Heart left ventricle (tissue), 16 donors: ENCODE measurements at regions of chr3 and their contacts with region 1.

Region 1: GRCh38 chr3:122679085-122679881 is 1.4 kb upstream of the PARP14 start:
- DNase-seq: peak; percentile 81 to 88 (median 84)
- ATAC-seq: peak; percentile 62 to 79 (median 77)
- H3K4me3 ChIP-seq: peak overlapping the region in 10 of 12 donors; percentile 3 to 92 (median 76)
- H3K27ac ChIP-seq: peak overlapping the region; percentile 76 to 96 (median 94)
- H3K4me1 ChIP-seq: peaks cover 0 to 55% (median 20%) of the 10 kb centered on the region in 12 donors
- H3K27me3 ChIP-seq: no peaks in the 10 kb centered on the region
- CTCF ChIP-seq: peak; percentile 69 to 89 (median 82)
- POLR2A ChIP-seq: no peak

Region 2: GRCh38 chr3:122392868-122393844 is 286.1 kb before region 1 on chr3:
- intact Hi-C with region 1: loop called in 9 of 10 experiments (anchors 1 to 10 kb)
- DNase-seq: no peak
- ATAC-seq: peak in 1 of 4 donors; percentile 34
- H3K4me3 ChIP-seq: no peak overlapping the region
- H3K27ac ChIP-seq: peak overlapping the region in 2 of 12 donors; percentile 1 to 32
- H3K4me1 ChIP-seq: peaks cover 0 to 28% (median 15%) of the 10 kb centered on the region in 12 donors
- H3K27me3 ChIP-seq: no peaks in the 10 kb centered on the region
- CTCF ChIP-seq: peak; percentile 56 to 83 (median 71)
- POLR2A ChIP-seq: no peak

Region 3: DNA sequence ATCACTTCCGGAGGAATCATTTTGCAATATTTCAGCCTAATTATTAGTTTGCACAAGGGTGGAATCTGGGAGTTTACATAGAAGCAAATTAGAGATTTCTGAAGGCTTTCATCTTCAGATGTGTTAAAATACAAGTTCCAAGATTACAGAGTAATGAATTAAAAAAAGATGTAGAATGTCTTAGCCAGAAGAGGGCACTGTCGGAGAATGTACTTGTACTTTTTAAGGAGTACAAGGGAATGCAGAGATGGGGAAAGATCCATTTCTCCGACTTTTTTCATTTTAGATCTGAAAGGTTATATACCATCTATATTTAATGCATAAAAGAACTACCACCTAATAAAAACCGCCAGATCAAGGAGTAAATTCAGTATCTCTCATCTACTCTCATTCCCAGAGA is 220.3 kb before region 1 on chr3:
- intact Hi-C with region 1: loop called in 8 of 10 experiments (anchors 2 to 10 kb)
- DNase-seq: no peak
- ATAC-seq: no peak
- H3K4me3 ChIP-seq: no peak overlapping the region
- H3K27ac ChIP-seq: no peak overlapping the region
- H3K4me1 ChIP-seq: no peaks in the 10 kb centered on the region
- H3K27me3 ChIP-seq: no peaks in the 10 kb centered on the region
- CTCF ChIP-seq: peak; percentile 5 to 61 (median 41)
- POLR2A ChIP-seq: no peak

Region 4: DNA sequence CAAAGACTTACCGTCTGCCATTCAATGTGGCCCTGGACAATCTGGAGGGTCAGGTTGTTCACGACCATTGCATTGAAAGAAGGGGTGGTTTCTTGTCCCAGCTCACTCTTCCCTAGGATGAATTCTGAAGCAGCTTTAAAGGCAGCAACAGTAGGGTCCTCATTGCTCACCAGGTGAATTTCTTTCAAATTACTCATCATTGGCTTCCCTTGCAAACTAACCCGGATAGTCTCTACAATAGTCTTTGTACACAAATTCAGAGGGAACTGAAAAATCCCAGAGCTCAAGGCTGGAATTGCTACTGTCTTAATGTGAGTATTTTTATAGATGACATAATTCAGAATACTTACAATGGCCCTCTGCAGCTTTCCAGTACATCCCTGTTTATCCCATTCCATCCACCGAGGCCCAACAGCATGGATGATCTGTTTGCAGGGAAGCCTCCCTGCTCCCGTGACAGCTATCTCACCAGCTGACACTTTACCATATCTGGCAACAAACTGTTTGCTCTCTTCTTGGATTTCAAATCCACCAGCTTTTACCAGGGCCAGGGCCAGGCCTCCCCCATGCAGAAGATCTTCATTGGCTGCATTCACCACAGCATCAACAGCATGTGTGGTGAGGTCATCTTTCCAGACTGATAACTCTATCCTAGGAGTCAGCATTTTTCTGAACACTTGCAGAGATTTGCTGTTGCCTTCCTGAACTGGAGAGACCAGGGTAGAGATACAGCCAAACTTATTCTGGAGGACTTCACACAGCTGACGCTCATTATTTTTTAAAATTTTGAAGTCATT is 123.8 kb before region 1 on chr3:
- intact Hi-C with region 1: loop called in 7 of 10 experiments (anchors 1 to 5 kb)
- DNase-seq: peak in 1 of 5 donors; percentile 28
- ATAC-seq: peak; percentile 46 to 74 (median 60)
- H3K4me3 ChIP-seq: no peak overlapping the region
- H3K27ac ChIP-seq: peak overlapping the region in 1 of 12 donors; percentile 3
- H3K4me1 ChIP-seq: peaks cover 0 to 16% (median 3%) of the 10 kb centered on the region in 12 donors
- H3K27me3 ChIP-seq: no peaks in the 10 kb centered on the region
- CTCF ChIP-seq: no peak
- POLR2A ChIP-seq: no peak

Region 5: DNA sequence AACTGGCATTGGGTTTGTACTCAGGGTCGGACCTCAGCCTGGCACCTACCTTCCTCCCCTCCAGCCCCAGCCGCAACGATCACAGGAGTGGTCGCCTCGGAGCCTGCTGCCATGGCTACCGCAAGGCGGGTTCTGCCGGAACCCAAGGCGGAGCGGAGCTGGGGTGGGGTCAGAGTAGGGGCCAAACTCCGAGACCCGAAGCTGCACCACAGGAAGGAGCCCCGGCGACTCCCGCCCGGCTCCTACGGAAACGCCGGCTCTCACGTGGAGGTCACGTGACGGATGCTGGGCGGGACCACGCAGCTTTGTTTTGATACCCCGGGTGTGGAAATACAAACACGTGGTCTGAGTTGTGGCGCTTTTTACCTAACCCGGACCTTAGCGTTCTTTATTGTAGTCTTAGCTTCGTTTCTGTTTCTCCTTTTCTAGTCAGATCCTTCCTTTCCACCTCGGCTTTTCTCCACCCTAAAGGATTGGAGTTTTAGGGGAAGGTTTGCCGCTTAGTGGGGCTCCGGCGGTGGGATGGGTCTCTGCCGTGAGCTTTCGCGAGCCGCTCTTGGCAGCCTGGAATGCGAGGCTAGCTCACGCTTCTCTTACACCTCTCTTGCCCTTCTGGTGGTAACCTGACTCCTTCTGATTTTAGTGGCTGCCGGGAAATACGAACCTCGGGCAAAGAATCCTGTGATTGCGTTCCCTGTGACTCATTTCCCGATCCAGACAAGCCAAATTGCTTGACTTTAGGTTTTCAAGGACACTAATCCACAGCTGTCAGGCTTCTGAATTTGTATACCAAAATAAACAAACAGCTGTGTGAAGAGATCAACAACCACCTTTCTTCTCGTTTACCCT is 114.5 kb after region 1 on chr3 and contains the start of gene HSPBAP1:
- intact Hi-C with region 1: loop called in 2 of 10 experiments (anchors 5 kb)
- DNase-seq: peak; percentile 93 to 96 (median 94)
- ATAC-seq: peak; percentile 76 to 90 (median 80)
- H3K4me3 ChIP-seq: peak within 1 kb of the TSS; percentile 68 to 92 (median 82)
- H3K27ac ChIP-seq: peak within 1 kb of the TSS; percentile 88 to 96 (median 95)
- H3K4me1 ChIP-seq: peaks cover 0 to 75% (median 12%) of the 10 kb centered on the region in 12 donors
- H3K27me3 ChIP-seq: no peaks in the 10 kb centered on the region
- CTCF ChIP-seq: no peak
- POLR2A ChIP-seq: peak in 1 of 2 donors; percentile 54
- total RNA-seq, gene HSPBAP1: 2.6 to 6.0 (median 3.7) TPM